ENCODE measurements at regions of chr18 and their contacts with region 1.

Region 1: GRCh38 chr18:33184958-33185357 is 255.6 kb downstream of the CCDC178 start:
- DNase-seq: no peak
- ATAC-seq: no peak
- H3K4me3 ChIP-seq: no peak overlapping the region
- H3K27ac ChIP-seq: no peak overlapping the region
- H3K4me1 ChIP-seq: peaks cover 12% of the 10 kb centered on the region
- H3K27me3 ChIP-seq: no peaks in the 10 kb centered on the region
- CTCF ChIP-seq: 0 out of 2 replicates have a peak, but pooled peaks have one; percentile 16

Region 2: GRCh38 chr18:32919799-32920198 is 265.2 kb before region 1 on chr18:
- CTCF ChIA-PET with region 1: no interaction called
- POLR2A ChIA-PET with region 1: no interaction called
- intact Hi-C with region 1: loop called (anchors 10 kb)
- DNase-seq: peak; percentile 38
- ATAC-seq: peak; percentile 51
- H3K4me3 ChIP-seq: no peak overlapping the region
- H3K27ac ChIP-seq: no peak overlapping the region
- H3K4me1 ChIP-seq: peaks cover 12% of the 10 kb centered on the region; the same call in 1 of the 2 replicates
- H3K27me3 ChIP-seq: no peaks in the 10 kb centered on the region
- CTCF ChIP-seq: peak; percentile 47

Region 3: DNA sequence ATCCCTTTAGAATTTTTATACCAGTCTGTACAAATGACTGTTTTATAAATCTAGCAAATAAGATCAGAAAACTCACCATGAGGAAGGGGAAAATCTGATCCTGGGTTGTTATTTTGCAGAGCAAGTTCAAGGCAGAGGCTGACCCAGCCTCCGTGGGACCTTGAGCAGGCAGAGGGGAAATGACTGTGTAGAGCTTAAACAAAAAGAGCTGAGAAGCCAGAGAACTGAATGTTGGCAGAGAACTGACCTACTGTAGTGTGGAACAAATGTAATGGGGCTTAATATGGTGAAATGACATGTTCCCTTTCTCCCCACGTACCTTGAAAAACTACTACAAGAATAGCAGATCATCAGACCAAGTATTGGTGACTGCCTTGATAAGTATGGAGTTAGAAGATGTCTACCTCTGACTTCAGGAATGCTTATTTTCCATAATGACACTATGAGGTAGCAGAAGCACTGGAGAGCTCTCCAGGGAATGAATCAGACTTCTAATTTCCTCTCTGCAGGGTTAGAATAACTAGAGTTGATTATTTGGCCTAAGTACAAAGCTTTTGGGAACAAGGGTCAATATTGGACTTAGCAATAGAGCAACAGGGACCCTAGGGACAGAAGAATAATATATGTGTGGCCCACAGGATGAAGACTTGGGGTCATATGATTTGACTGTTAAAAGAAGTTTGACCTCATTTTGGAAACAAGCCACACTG is 48.9 kb before region 1 on chr18:
- CTCF ChIA-PET with region 1: no interaction called
- POLR2A ChIA-PET with region 1: no interaction called
- intact Hi-C with region 1: no loop called
- DNase-seq: no peak
- ATAC-seq: no peak
- H3K4me3 ChIP-seq: no peak overlapping the region
- H3K27ac ChIP-seq: no peak overlapping the region
- H3K4me1 ChIP-seq: no peaks in the 10 kb centered on the region
- H3K27me3 ChIP-seq: no peaks in the 10 kb centered on the region
- CTCF ChIP-seq: no peak

Measured in PC-3 (cell line).